ENCODE measurements at regions of chr6 and their contacts with region 1.

Region 1: GRCh38 chr6:106085984-106086813 is at the start of gene PRDM1:
- DNase-seq: peak; percentile 33 to 79 (median 53)
- ATAC-seq: peak; percentile 92
- H3K4me3 ChIP-seq: peak within 1 kb of the TSS; percentile 63
- H3K4me3 Mint-ChIP-seq: peak within 1 kb of the TSS; percentile 84 to 96 (median 90)
- H3K27ac ChIP-seq: no peak within 1 kb of the TSS
- H3K27ac Mint-ChIP-seq: peak within 1 kb of the TSS; percentile 37 to 92 (median 78)
- H3K4me1 ChIP-seq: peaks cover 50 to 60% of the 10 kb centered on the region in 2 donors
- H3K4me1 Mint-ChIP-seq: peaks cover 50 to 89% (median 76%) of the 10 kb centered on the region in 7 donors
- H3K27me3 ChIP-seq: peaks cover 0 to 14% of the 10 kb centered on the region in 2 donors
- H3K27me3 Mint-ChIP-seq: peaks cover 10 to 47% (median 18%) of the 10 kb centered on the region in 5 donors
- total RNA-seq, gene PRDM1: 2.0 to 64.1 (median 22.6) TPM

Region 2: GRCh38 chr6:105484238-105485161 is 601.7 kb before region 1 on chr6:
- CTCF ChIA-PET with region 1: interaction called, 3 read pairs
- POLR2A ChIA-PET with region 1: no interaction called
- intact Hi-C with region 1: loop called in 1 of 2 experiments (anchors 2 kb)
- DNase-seq: peak in 5 of 9 donors; percentile 7 to 36 (median 20)
- ATAC-seq: peak; percentile 59
- H3K4me3 ChIP-seq: no peak overlapping the region
- H3K4me3 Mint-ChIP-seq: no peak overlapping the region
- H3K27ac ChIP-seq: no peak overlapping the region
- H3K27ac Mint-ChIP-seq: peak overlapping the region in 2 of 9 donors; percentile 20 to 52
- H3K4me1 ChIP-seq: peaks cover 0 to 35% of the 10 kb centered on the region in 2 donors
- H3K4me1 Mint-ChIP-seq: peaks cover 0 to 63% (median 0%) of the 10 kb centered on the region in 7 donors
- H3K27me3 ChIP-seq: no peaks in the 10 kb centered on the region
- H3K27me3 Mint-ChIP-seq: peaks cover 11 to 16% (median 13%) of the 10 kb centered on the region in 5 donors

Region 3: DNA sequence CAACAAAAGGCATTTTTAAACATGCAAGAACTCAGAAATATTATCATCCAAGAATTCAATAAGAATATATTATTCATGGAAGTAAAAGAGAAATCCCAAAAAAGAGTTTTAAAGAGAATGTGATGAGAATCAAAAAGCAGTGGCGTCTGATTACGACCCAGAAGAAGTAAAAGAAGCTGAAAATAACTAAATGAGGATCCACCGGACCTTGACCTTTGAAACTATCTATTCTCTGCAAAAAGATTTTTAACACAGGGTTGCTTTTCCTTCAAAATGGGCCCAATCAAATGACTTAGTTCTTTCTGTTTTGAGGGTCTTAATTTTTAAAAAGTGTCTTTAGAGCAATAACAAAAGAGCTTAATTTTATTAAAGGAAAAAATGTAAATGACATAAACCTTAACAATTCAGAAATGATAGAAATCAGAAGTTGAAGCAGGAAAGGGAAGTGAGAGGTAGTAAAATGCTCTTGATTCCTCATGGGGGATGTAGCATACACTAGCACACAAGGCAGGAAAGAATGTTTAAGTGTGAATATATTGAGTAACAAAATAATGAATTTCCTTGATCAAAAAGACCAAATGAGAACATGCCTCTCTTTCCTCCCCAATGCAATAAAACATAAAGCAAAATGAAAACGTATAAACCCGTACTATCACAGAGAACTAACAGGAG is 223.1 kb before region 1 on chr6:
- CTCF ChIA-PET with region 1: no interaction called
- POLR2A ChIA-PET with region 1: no interaction called
- intact Hi-C with region 1: no loop called
- DNase-seq: no peak
- ATAC-seq: no peak
- H3K4me3 ChIP-seq: no peak overlapping the region
- H3K4me3 Mint-ChIP-seq: no peak overlapping the region
- H3K27ac ChIP-seq: no peak overlapping the region
- H3K27ac Mint-ChIP-seq: no peak overlapping the region
- H3K4me1 ChIP-seq: no peaks in the 10 kb centered on the region
- H3K4me1 Mint-ChIP-seq: peaks cover 0 to 3% (median 0%) of the 10 kb centered on the region in 7 donors
- H3K27me3 ChIP-seq: no peaks in the 10 kb centered on the region
- H3K27me3 Mint-ChIP-seq: peaks cover 0 to 36% (median 7%) of the 10 kb centered on the region in 5 donors

Region 4: DNA sequence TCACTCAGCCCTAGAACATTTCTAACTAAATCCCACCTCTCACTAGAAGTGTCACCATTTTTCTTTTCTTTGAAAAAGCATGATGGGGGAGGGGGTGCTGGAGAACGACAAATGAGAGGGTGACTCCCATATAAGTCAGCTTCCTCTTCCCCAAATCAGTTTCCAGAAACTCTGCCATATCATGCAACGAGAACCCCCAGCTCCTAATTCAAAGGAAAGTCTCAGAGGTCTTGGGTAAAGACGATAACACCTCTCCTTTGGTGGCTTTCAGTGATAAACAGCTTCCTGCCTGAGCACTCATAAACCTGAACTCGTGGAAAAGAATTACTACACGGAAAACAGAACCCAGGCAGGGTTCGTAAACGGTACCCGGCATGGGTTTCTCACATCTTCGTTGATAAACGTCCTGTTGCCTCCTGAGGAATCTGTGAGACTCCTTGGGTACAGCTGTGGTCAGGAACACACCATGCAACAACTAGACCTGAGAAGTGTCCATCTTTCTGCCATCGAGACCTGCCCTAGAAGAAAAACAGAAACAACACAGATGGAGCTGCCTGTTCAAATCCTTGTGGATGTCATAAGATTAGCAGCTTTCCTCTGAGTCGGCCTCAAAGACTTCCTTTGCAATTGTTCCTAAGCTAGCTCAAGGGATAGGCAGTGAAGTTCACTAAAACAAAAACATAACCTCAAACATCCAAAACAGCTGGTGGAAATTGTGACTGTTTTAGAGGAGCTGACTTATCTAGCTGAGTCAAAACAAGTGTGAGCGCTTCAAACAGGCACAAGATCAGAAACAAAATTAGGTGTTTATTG is 185.9 kb before region 1 on chr6:
- CTCF ChIA-PET with region 1: no interaction called
- POLR2A ChIA-PET with region 1: no interaction called
- intact Hi-C with region 1: loop called in 1 of 2 experiments (anchors 2 kb)
- DNase-seq: peak in 2 of 9 donors; percentile 11 to 33
- ATAC-seq: peak; percentile 52
- H3K4me3 ChIP-seq: no peak overlapping the region
- H3K4me3 Mint-ChIP-seq: peak overlapping the region in 9 of 10 donors; percentile 23 to 84 (median 70)
- H3K27ac ChIP-seq: no peak overlapping the region
- H3K27ac Mint-ChIP-seq: peak overlapping the region in 2 of 9 donors; percentile 53 to 95
- H3K4me1 ChIP-seq: peaks cover 4 to 8% of the 10 kb centered on the region in 2 donors
- H3K4me1 Mint-ChIP-seq: peaks cover 9 to 26% (median 12%) of the 10 kb centered on the region in 7 donors
- H3K27me3 ChIP-seq: no peaks in the 10 kb centered on the region
- H3K27me3 Mint-ChIP-seq: peaks cover 0 to 4% (median 0%) of the 10 kb centered on the region in 5 donors

Region 5: DNA sequence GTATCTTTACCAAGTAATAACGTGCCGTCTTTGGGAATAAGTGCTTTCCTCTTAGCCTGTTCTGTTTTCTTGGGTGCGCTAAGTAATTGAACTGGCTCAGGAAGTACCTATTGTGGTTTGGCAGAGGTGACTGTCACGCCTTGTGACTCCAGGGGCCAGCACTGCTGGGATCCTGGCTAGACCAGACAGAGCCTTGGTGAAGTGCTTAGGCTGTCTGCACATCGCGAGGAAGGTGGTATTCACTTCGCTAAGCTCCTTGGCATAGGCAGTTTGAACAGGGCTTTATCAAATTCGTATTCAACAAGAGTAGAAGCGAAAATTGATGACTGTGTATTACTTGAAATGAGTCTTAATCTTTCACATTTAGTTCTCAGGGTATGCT is 17.5 kb after region 1 on chr6:
- CTCF ChIA-PET with region 1: interaction called, 9 read pairs
- POLR2A ChIA-PET with region 1: interaction called, 5 read pairs
- intact Hi-C with region 1: loop called (anchors 1 to 2 kb)
- DNase-seq: peak in 4 of 9 donors; percentile 22 to 32 (median 29)
- ATAC-seq: peak; percentile 65
- H3K4me3 ChIP-seq: peak overlapping the region; percentile 42
- H3K4me3 Mint-ChIP-seq: peak overlapping the region; percentile 69 to 95 (median 78)
- H3K27ac ChIP-seq: no peak overlapping the region
- H3K27ac Mint-ChIP-seq: peak overlapping the region in 8 of 9 donors; percentile 48 to 99 (median 74)
- H3K4me1 ChIP-seq: peaks cover 25 to 32% of the 10 kb centered on the region in 2 donors
- H3K4me1 Mint-ChIP-seq: peaks cover 22 to 81% (median 54%) of the 10 kb centered on the region in 7 donors
- H3K27me3 ChIP-seq: no peaks in the 10 kb centered on the region
- H3K27me3 Mint-ChIP-seq: no peaks in the 10 kb centered on the region

Region 6: DNA sequence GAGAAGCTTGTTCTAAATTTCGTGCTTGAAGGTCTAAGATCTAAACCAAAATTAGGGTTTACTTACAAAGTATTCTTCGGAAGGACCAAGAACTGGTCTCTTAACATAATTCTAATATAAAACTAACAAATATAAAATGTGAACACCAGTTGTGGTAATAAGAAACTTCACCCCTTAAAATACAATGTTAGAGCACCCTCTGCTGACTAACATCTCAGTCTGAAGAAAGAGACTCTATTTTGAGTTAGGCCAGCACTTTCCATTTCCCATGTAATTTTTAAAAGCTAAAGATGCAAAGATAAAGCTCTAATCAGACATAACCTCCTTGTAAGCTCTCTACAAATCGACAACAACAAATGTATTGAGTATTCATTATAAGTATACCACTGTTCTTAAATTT is 214.7 kb after region 1 on chr6:
- CTCF ChIA-PET with region 1: no interaction called
- POLR2A ChIA-PET with region 1: interaction called, 4 read pairs
- intact Hi-C with region 1: loop called (anchors 1 to 2 kb)
- DNase-seq: peak in 5 of 9 donors; percentile 4 to 22 (median 19)
- ATAC-seq: no peak
- H3K4me3 ChIP-seq: no peak overlapping the region
- H3K4me3 Mint-ChIP-seq: peak overlapping the region in 1 of 10 donors; percentile 10
- H3K27ac ChIP-seq: no peak overlapping the region
- H3K27ac Mint-ChIP-seq: no peak overlapping the region
- H3K4me1 ChIP-seq: no peaks in the 10 kb centered on the region
- H3K4me1 Mint-ChIP-seq: peaks cover 4 to 32% (median 12%) of the 10 kb centered on the region in 7 donors
- H3K27me3 ChIP-seq: no peaks in the 10 kb centered on the region
- H3K27me3 Mint-ChIP-seq: no peaks in the 10 kb centered on the region